PC-9 (cell line): ENCODE measurements at regions of chr5 and their contacts with region 1.

Region 1: GRCh38 chr5:142404046-142404477 is 79.2 kb upstream of the SPRY4 start:
- DNase-seq: no peak
- H3K4me3 ChIP-seq: peak overlapping the region; percentile 55
- H3K27ac ChIP-seq: peak overlapping the region; percentile 87
- H3K4me1 ChIP-seq: peaks cover 57% of the 10 kb centered on the region
- H3K27me3 ChIP-seq: no peaks in the 10 kb centered on the region
- CTCF ChIP-seq: no peak

Region 2: DNA sequence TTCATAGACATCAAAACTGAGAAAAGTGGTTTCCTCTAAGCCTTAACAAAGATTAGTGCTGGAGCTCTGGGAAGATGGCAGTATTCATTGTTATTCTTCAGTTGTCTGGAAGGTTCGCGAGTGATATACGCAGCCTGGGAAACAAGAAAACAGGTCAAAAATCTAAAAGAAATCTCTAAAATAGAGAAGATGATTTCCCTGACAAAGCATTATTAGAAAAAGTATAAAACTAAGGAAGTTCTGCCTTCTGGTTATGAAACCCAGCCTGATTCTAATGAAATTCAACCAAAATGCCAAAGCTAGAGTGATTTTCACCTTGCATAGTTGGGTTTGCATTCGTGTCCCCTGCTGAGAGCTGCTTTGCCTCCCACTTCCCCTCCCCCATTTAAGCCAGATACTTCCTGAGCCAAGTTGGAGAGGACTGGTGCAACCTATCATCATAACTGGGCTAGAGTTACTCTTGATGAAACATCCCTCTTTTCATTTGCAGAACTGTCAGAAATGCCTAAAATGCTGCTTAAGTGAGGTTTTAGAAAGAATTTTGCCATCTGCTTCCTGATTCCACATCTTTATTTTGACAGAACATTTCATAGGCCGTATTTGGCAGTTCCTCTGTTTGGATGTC is 247.1 kb before region 1 on chr5:
- CTCF ChIA-PET with region 1: no interaction called
- POLR2A ChIA-PET with region 1: no interaction called
- intact Hi-C with region 1: loop called (anchors 5 kb)
- DNase-seq: no peak
- H3K4me3 ChIP-seq: no peak overlapping the region
- H3K27ac ChIP-seq: no peak overlapping the region
- H3K4me1 ChIP-seq: peaks cover 15% of the 10 kb centered on the region; the same call in 1 of the 2 replicates
- H3K27me3 ChIP-seq: no peaks in the 10 kb centered on the region
- CTCF ChIP-seq: no peak

Region 3: DNA sequence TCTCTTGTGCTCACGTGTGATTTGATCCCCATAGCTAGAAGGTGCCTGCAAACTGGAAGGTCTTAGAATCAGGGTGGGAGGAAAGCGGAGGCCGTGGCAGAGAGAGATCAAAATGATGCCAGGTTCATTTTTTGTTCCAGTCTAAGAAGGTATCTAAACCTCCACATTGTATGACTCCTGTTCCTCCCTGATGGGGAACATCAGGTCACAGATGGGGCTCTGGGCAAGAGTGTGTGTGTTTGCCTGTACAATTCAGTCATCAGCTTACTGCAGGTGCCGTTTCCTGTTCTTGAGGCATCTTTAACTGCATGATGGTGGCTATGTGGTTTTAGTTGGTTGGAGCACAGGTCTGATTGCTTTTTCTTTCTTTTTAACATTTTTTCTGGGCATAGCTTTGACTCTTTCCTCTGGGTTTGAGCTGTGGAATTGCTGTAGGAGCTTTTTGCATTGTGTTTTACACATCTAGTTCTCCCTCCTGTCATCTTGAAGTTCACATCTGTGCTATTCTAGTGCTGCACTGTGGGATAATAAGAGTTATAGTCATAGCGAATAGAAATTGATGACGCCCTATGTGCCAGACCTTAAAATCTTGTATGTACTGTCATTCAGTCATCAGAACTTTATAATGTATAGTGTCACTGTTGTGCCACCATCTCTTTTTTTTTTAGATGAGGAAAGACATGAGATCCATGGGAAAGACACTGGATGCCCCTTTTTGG is 396.9 kb after region 1 on chr5:
- CTCF ChIA-PET with region 1: no interaction called
- POLR2A ChIA-PET with region 1: no interaction called
- intact Hi-C with region 1: no loop called
- DNase-seq: no peak
- H3K4me3 ChIP-seq: no peak overlapping the region
- H3K27ac ChIP-seq: no peak overlapping the region
- H3K4me1 ChIP-seq: no peaks in the 10 kb centered on the region
- H3K27me3 ChIP-seq: no peaks in the 10 kb centered on the region
- CTCF ChIP-seq: no peak